Vagina (tissue), 2 donors: ENCODE measurements at regions of chr12 and their contacts with region 1.

Region 1: GRCh38 chr12:27024291-27024690 is 1.9 kb downstream of the MED21 start:
- DNase-seq: no peak
- H3K4me3 ChIP-seq: peak overlapping the region in 1 of 2 donors; percentile 62
- H3K27ac ChIP-seq: no peak overlapping the region
- H3K4me1 ChIP-seq: peaks cover 28% of the 10 kb centered on the region
- H3K27me3 ChIP-seq: no peaks in the 10 kb centered on the region
- CTCF ChIP-seq: no peak
- POLR2A ChIP-seq: no peak

Region 2: DNA sequence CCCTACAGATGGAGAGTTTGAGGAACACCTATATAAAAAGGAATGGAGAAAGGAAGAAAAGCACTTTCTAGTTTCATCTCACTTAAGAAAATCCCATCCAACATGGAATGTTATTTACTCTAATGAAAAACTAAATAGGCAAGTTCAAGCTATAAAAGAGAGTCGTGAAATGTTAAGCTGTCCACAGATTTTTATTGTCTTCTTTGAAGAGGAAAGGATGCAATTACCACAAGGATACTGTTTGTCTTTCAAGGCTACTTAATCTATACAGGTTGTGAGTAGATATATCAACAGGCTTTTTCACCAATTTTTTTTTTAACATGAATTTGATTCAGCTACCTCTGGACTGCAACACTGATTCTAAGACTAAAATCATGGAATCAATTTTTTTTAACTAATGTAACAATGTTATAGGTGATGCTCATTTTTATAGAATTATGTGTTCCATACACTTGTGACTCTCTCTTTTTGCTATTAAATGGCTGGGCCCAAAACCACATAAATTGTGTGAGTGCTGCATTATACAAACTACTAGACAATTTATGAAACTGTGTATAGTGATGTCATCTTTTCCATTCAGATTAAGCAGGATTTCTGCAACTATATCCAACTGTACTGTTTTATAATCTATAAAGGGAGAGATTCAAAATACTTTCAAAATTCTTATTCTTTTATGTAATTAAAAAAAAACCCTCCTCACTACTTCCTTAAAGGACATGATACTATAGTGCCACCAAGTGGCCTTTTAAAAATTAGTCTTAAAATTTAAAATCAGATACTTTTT is 281.6 kb after region 1 on chr12:
- intact Hi-C with region 1: loop called (anchors 10 kb)
- DNase-seq: no peak
- H3K4me3 ChIP-seq: no peak overlapping the region
- H3K27ac ChIP-seq: peak overlapping the region; percentile 62
- H3K4me1 ChIP-seq: peaks cover 7% of the 10 kb centered on the region
- H3K27me3 ChIP-seq: no peaks in the 10 kb centered on the region
- CTCF ChIP-seq: peak; percentile 3 to 57 (median 41)
- POLR2A ChIP-seq: no peak